Thyroid gland (tissue), 4 donors: ENCODE measurements at regions of chr1 and their contacts with region 1.

Region 1: DNA sequence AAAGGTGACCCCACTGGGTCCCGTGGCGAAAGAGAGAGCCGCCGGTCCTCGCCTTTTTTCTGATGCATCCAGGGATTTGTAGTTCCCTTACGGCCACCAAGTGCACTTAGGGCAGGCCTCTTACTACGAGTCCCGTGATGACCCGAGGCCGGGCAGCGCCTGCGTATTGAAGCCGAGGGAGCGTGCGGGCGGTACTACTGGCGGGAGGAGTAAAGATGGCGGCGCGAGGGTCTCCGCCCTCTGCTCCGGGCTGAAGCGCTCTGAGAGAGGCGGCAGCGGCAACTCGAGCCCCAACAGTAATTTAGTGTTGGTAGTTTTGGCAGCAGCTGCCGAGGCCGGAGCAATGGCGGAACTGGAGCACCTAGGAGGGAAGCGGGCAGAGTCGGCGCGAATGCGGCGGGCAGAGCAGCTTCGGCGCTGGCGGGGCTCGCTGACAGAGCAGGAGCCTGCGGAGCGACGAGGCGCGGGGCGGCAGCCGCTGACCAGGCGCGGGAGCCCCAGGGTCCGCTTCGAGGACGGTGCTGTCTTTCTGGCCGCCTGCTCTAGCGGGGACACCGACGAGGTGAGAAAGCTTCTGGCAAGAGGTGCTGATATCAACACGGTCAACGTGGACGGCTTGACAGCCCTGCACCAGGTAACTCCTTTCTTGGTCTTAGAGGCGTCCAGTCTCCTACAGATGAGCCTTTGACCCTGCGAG is at the start of gene PPP1R12B:
- DNase-seq: peak; percentile 99
- H3K4me3 ChIP-seq: peak within 1 kb of the TSS; percentile 55 to 86 (median 86)
- H3K27ac ChIP-seq: peak within 1 kb of the TSS; percentile 74 to 84 (median 75)
- H3K4me1 ChIP-seq: peaks cover 11 to 17% of the 10 kb centered on the region in 2 donors
- H3K27me3 ChIP-seq: no peaks in the 10 kb centered on the region
- CTCF ChIP-seq: peak in 1 of 6 experiments; percentile 7
- POLR2A ChIP-seq: peak; percentile 32 to 90
- total RNA-seq, gene PPP1R12B: 34.9 to 48.5 (median 41.3) TPM

Region 2: DNA sequence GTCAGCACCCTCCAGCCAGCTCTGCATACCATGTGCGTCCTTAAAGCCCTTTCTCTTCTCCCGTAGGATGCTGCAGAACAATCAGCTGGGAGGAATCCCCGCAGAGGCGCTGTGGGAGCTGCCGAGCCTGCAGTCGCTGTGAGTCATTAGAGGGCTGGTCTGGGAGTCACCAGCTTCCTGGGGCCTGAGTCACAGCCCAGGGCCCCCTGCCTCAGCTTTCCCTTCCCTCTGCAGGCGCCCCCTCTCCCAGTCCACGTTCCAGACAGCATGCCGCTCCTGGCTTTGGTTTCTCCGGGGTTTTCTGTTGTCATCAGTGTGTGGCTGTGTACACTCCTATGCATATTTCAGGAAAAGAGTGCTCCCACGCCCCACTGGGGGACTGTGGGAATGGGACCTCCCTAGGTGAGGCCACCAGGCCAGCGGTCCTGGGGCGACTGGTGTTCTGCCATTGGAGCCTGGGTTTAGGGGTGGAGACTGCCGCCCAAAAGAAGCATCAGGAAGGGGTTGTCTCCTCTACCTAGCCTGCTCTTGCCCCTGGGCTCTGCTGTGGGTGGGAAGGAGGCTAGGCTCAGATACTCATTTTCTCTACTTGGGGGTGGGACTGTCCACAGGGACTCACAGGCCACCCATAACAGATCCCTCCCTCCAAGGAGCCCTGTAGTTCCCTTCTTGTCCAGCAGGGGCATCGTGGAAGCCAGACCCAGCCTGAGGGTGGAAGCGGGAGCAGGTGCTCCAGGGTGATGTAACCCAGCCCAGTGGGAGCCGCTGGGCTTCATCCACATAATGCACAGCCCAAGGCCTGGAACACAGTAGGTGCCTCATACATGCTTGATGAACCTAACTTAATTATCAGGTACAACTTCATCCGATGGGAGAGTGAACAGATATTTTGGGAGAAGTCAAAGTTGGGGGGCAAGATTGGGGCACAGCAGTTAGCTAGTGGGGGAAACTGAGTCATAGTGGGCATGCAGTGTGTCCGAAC is 112.5 kb before region 1 on chr1:
- intact Hi-C with region 1: no loop called
- DNase-seq: peak; percentile 66 to 71
- H3K4me3 ChIP-seq: no peak overlapping the region
- H3K27ac ChIP-seq: no peak overlapping the region
- H3K4me1 ChIP-seq: peaks cover 0 to 4% of the 10 kb centered on the region in 2 donors
- H3K27me3 ChIP-seq: no peaks in the 10 kb centered on the region
- CTCF ChIP-seq: peak in 5 of 6 experiments; percentile 64 to 92 (median 71)
- POLR2A ChIP-seq: no peak

Region 3: GRCh38 chr1:202710070-202711045 is 361.7 kb after region 1 on chr1 and contains the start of gene SYT2:
- intact Hi-C with region 1: loop called (anchors 10 kb)
- DNase-seq: peak; percentile 54 to 57
- H3K4me3 ChIP-seq: peak within 1 kb of the TSS in 1 of 3 donors; percentile 12
- H3K27ac ChIP-seq: no peak within 1 kb of the TSS
- H3K4me1 ChIP-seq: peaks cover 12 to 17% of the 10 kb centered on the region in 2 donors
- H3K27me3 ChIP-seq: peaks cover 11% of the 10 kb centered on the region
- CTCF ChIP-seq: no peak
- POLR2A ChIP-seq: no peak
- total RNA-seq, gene SYT2: under 0.01 to 0.38 TPM in 2 of 4 donors, not detected in the others